ENCODE measurements at regions of chr19 and their contacts with region 1.

Region 1: GRCh38 chr19:51318687-51319648 is 7.5 kb downstream of the IGLON5 start:
- DNase-seq: no peak
- H3K4me3 ChIP-seq: no peak overlapping the region
- H3K27ac ChIP-seq: no peak overlapping the region
- H3K4me1 ChIP-seq: no peaks in the 10 kb centered on the region
- H3K27me3 ChIP-seq: peaks cover 0 to 55% of the 10 kb centered on the region in 2 donors
- CTCF ChIP-seq: no peak
- POLR2A ChIP-seq: no peak

Region 2: GRCh38 chr19:50383852-50384684 is 934.9 kb before region 1 on chr19 and contains the start of gene POLD1:
- intact Hi-C with region 1: no loop called
- DNase-seq: peak; percentile 98
- H3K4me3 ChIP-seq: peak within 1 kb of the TSS; percentile 62 to 75 (median 65)
- H3K27ac ChIP-seq: peak within 1 kb of the TSS; percentile 84 to 97
- H3K4me1 ChIP-seq: no peaks in the 10 kb centered on the region
- H3K27me3 ChIP-seq: no peaks in the 10 kb centered on the region
- CTCF ChIP-seq: no peak
- POLR2A ChIP-seq: no peak
- total RNA-seq, gene POLD1: 13.8 to 17.3 (median 16.0) TPM

Region 3: DNA sequence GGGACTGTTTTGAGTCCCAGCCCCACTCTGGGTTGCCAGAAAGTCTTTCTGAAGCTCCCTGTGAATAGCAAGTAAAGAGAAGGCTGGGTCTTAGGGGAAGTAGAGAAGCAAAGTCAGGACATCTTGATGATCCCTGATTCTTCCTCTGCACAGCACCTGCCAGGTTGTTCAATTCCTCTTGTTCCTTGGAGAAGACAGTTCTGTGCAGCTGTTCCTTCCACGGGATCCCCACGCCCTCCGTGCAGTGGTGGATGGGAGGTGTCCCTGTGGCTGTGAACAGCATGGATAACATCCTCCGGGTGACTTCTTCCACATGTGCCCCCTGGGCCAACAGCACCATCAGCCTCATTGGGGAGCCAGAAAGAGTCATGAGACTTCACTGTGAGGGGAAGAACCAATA is 36.6 kb before region 1 on chr19:
- intact Hi-C with region 1: no loop called
- DNase-seq: no peak
- H3K4me3 ChIP-seq: no peak overlapping the region
- H3K27ac ChIP-seq: no peak overlapping the region
- H3K4me1 ChIP-seq: no peaks in the 10 kb centered on the region
- H3K27me3 ChIP-seq: peaks cover 0 to 26% of the 10 kb centered on the region in 2 donors
- CTCF ChIP-seq: no peak
- POLR2A ChIP-seq: no peak

Region 4: DNA sequence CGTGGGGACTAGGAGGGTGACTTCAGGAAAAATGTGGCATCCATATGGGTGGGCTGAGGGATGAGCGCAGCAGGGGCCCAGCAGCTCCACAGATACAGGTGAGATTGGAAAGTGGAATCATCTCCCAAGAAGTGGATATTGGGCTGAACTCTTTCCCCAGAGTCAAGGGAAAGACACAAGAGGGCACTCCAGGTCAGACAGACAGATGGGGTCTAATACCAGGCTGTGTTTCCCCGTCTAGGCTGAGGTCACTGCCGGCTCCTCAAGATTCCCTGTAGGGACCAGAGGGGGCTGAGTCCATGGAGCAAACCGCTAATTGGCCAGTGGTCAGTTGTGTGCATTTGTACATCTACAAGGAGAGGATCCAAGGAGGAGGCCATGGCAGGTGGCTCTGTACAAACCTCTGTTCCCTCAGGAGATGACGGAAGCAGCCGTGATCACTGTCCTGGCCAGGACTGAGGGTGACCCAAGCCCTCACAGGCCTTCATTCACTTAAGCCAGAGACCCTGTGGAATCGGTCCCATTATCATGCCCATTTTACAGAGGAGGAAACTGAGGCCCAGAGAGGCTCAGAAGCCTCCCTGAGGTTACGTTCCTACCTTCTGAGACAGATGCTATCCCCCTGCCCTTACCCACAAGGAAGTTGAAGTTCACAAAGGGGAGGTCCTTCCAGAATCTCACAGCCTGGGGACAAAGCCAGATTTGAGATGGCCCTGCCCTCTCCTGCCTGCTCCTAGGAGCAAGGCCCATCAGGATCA is 22.5 kb before region 1 on chr19:
- intact Hi-C with region 1: loop called (anchors 2 kb)
- DNase-seq: no peak
- H3K4me3 ChIP-seq: no peak overlapping the region
- H3K27ac ChIP-seq: no peak overlapping the region
- H3K4me1 ChIP-seq: no peaks in the 10 kb centered on the region
- H3K27me3 ChIP-seq: peaks cover 0 to 41% of the 10 kb centered on the region in 2 donors
- CTCF ChIP-seq: no peak
- POLR2A ChIP-seq: no peak